Heart left ventricle (tissue), 16 donors: ENCODE measurements at regions of chr1 and their contacts with region 1.

Region 1: GRCh38 chr1:182768963-182769362 is 20.6 kb upstream of the NPL start:
- DNase-seq: no peak
- ATAC-seq: peak in 1 of 4 donors; percentile 60
- H3K4me3 ChIP-seq: no peak overlapping the region
- H3K27ac ChIP-seq: peak overlapping the region in 3 of 12 donors; percentile 30 to 39 (median 32)
- H3K4me1 ChIP-seq: peaks cover 0 to 20% (median 0%) of the 10 kb centered on the region in 12 donors
- H3K27me3 ChIP-seq: no peaks in the 10 kb centered on the region
- CTCF ChIP-seq: no peak
- POLR2A ChIP-seq: no peak

Region 2: DNA sequence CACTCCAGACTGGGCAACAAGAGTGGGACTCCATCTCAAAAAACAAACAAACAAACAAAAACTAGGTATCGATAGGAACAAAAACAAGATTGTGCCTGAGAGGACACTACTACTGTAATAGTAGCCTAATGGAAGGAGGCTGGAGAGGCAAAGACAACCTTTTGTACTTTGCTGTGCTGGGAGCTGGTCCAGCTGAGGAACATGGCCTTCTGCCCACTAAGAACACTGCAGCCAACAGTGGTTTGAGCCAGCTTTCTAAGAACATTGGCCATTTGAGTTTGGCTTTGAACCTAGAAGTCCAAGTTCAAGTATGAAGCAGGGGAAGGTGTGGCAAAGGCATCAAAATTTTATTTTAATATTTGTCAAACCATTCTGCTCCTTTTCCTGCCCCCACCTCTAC is 61.8 kb before region 1 on chr1:
- intact Hi-C with region 1: loop called in 1 of 10 experiments (anchors 5 kb)
- DNase-seq: peak in 4 of 5 donors; percentile 30 to 66 (median 39)
- ATAC-seq: peak; percentile 90 to 95 (median 94)
- H3K4me3 ChIP-seq: no peak overlapping the region
- H3K27ac ChIP-seq: no peak overlapping the region
- H3K4me1 ChIP-seq: peaks cover 0 to 4% (median 0%) of the 10 kb centered on the region in 12 donors
- H3K27me3 ChIP-seq: no peaks in the 10 kb centered on the region
- CTCF ChIP-seq: no peak
- POLR2A ChIP-seq: no peak

Region 3: DNA sequence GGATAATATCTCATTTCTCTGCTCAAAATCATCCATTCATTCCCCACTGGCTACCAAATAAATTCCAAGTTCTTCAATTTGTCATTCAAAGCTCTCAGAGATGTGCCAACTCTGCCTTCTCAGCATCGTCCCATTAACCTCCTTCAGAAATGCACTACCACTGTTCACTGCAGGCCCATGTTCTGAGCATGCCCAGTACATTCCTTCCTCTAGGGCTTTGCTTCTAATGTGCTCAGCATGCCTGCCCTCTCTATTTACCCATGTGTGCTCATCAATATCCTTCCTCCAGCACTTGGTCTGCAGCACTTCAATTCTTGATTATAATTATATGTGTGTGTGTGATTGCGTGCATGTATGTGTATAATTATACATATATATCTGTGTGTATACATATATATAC is 48.5 kb before region 1 on chr1:
- intact Hi-C with region 1: loop called in 1 of 10 experiments (anchors 10 kb)
- DNase-seq: no peak
- ATAC-seq: no peak
- H3K4me3 ChIP-seq: no peak overlapping the region
- H3K27ac ChIP-seq: no peak overlapping the region
- H3K4me1 ChIP-seq: peaks cover 0 to 4% (median 0%) of the 10 kb centered on the region in 12 donors
- H3K27me3 ChIP-seq: no peaks in the 10 kb centered on the region
- CTCF ChIP-seq: peak in 3 of 12 donors; percentile 6 to 20 (median 19)
- POLR2A ChIP-seq: no peak

Region 4: DNA sequence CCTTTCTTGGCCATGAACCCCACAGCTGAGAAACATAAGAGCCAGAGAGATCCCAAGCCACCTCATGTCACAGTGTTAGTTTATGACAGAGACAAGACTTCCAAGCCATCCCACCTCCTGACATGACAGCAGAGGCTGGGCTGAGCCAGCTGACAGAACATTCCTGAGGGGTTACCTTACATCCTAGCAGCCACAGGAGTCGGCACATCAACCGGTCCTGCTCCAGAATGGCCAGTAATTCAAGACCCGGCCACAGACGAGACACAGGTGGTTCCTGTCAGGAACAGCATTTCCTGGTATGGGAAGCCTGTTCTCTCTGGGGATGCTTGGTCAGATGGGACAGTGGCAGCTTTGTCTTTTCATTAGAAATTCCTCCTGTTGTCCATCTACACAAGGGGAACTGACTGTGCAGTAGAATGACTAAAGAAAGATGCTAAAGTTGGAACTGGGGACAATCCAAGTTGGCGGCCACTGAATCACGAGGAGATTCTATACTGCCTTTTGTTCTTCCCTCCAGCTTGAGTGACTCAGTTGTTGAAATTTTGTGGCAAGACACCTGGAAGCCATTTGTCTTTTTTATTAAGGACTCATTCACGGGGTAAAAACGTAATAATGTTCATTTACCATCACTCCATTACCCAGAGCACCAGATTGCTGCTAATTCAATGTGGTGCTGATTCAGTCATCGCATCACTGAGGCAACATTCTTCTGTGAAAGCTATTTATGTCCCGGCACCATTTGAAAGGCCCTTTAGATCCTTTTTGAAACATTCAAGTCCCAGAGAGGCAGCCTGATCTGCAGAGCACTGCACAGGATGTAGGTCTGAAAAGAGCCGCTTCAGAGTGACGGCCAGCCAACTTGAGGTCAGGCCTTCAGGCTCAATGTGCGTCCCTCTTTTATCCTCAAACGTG is 16.6 kb before region 1 on chr1:
- intact Hi-C with region 1: no loop called
- DNase-seq: peak in 4 of 5 donors; percentile 31 to 52 (median 46)
- ATAC-seq: peak in 3 of 4 donors; percentile 73 to 90 (median 82)
- H3K4me3 ChIP-seq: no peak overlapping the region
- H3K27ac ChIP-seq: peak overlapping the region in 6 of 12 donors; percentile 11 to 52 (median 24)
- H3K4me1 ChIP-seq: peaks cover 0 to 17% (median 6%) of the 10 kb centered on the region in 12 donors
- H3K27me3 ChIP-seq: no peaks in the 10 kb centered on the region
- CTCF ChIP-seq: no peak
- POLR2A ChIP-seq: no peak